Right cardiac atrium (tissue), 5 donors: ENCODE measurements at regions of chr3 and their contacts with region 1.

Region 1: DNA sequence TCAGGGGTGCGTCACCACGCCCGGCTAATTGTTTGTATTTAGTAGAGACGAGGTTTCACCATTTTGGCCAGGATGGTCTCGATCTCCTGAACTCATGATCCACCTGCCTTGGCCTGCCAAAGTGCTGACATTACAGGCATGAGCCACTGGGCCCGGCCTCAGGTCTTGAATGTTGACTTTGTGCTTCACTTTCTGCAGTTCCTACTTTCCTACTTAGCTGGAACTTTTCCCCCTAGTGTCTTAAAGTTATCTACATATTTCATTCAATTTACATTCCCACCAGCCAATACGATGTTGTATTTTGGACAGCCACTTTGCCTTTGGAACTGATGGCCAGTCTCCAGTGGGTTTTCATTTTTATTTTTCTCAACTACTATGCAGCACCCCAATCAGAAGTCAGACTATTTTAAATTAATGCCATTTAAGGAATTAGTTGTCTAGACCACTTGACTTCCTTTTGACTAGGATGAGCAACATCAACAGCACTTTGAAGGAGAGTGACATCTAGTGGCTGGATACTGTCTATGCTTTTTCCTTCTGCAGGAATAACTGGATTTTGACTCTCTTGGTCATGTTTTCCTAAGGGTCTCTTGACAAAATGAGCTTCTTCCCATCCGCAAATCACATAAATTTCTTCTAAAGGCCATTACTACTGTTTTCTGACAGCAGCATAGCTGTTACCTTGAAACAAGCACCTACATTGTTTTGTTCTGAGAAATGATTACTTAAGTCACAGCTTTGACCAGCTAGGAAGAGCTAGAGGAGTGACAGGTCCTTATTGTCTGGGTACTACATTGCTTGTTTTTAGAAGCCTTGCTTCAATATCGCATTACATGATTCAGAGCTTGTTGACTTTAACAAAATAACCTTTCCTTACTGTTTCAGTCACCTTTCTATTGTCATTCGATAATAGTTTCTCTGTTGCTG is 140.2 kb downstream of the ITPR1 start:
- DNase-seq: no peak
- ATAC-seq: peak; percentile 72 to 76
- H3K4me3 ChIP-seq: no peak overlapping the region
- H3K27ac ChIP-seq: no peak overlapping the region
- H3K4me1 ChIP-seq: no peaks in the 10 kb centered on the region
- H3K27me3 ChIP-seq: no peaks in the 10 kb centered on the region

Region 2: DNA sequence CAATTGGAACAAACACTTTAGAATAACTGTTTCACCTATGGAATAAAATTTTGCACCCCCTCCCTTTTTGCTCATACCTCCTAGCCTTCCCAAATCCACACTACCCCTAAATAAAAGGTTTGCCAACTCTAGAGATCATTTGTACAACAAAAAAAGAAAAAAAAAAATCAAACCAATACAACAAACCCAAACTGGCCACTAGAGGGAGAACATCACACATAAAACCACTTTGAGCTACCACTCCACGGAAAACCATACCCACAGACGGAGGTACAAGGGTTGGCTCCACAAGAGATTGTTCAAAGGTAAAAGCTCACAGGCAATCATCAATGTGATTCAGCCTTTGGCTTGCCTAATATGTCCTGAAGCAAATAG is 282.6 kb before region 1 on chr3:
- intact Hi-C with region 1: loop called (anchors 2 to 5 kb)
- DNase-seq: no peak
- ATAC-seq: peak; percentile 90 to 92
- H3K4me3 ChIP-seq: peak overlapping the region; percentile 60
- H3K27ac ChIP-seq: no peak overlapping the region
- H3K4me1 ChIP-seq: no peaks in the 10 kb centered on the region
- H3K27me3 ChIP-seq: no peaks in the 10 kb centered on the region

Region 3: GRCh38 chr3:4504340-4505261 is 128.7 kb before region 1 on chr3:
- intact Hi-C with region 1: loop called in 2 of 4 experiments (anchors 10 kb)
- DNase-seq: peak in 2 of 3 donors; percentile 27 to 47
- ATAC-seq: peak; percentile 35 to 55
- H3K4me3 ChIP-seq: no peak overlapping the region
- H3K27ac ChIP-seq: peak overlapping the region; percentile 31
- H3K4me1 ChIP-seq: no peaks in the 10 kb centered on the region
- H3K27me3 ChIP-seq: no peaks in the 10 kb centered on the region

Region 4: DNA sequence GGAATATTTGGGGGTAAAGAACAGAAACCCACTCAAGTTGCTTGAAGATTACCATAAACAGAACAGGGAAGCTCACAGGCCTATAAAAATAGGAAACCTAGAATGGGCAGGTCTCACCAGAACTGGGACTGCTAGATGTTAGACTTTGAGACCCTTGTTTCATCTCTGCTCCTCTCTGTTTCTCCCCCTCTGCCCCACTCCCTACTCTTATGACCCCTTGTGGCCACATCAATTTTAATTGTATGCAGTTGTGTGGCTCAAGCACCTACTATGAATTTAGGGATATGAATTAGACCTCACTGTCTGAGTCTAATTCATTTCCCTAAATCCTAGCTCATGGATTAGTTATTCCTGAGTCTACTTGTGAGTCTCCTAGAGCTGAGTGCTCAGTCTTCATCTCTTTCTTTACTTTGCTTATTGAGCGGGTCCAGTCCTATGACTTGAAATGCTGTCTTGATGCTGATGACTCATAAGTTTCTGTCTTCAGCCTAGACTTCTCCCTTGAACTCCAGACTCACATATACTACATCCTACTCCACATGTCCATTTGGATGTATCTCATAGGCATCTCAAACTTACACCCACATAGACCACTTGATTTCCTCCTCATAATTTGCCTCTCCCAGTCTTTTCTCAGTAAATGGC is 61.5 kb before region 1 on chr3:
- intact Hi-C with region 1: loop called in 1 of 4 experiments (anchors 10 kb)
- DNase-seq: no peak
- ATAC-seq: no peak
- H3K4me3 ChIP-seq: no peak overlapping the region
- H3K27ac ChIP-seq: no peak overlapping the region
- H3K4me1 ChIP-seq: no peaks in the 10 kb centered on the region
- H3K27me3 ChIP-seq: no peaks in the 10 kb centered on the region